Psoas muscle (tissue), 8 donors: ENCODE measurements at regions of chr2 and their contacts with region 1.

Region 1: DNA sequence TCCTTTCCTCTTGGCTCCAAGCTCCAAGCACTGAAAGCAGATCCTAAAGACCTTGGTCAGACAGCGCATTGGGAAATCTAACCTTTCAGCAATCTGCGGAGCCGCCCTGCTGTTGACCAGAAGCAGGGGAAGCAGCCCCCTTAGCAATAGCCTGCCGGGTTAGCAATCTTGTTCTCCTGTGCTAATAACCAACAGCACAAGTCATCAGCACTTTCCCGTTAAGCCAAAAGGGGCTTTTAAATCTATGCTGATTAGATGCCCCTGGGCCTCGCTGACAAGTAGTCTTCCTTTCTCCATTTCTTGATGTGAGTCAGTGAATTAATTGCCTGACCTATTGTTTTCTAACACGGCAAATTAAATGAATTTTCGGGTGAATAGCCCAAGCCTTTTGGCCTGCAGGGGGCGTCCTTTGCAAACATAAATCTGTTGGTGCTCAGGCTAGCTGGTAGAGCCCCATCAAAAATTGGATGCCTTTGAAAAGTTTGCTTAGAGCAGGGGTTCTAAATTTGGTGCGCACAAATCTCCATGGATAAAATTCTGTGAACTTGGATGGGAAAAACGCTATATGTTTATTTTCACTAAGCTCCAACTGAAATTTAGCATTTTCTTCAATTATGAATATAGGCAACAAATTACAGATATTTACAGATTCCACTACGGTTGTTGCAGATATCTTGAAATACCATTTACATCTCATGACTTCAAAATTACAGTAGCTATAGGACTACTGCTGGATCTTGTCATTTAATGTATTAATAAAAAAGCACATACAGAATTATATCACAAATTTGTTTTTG is 24.6 kb downstream of the MAIP1 start:
- DNase-seq: peak; percentile 80 to 89
- ATAC-seq: peak; percentile 63 to 91 (median 73)
- H3K4me3 ChIP-seq: peak overlapping the region; percentile 22
- H3K27ac ChIP-seq: no peak overlapping the region
- H3K4me1 ChIP-seq: no peaks in the 10 kb centered on the region
- H3K27me3 ChIP-seq: no peaks in the 10 kb centered on the region
- CTCF ChIP-seq: peak; percentile 89

Region 2: GRCh38 chr2:200471928-200472645 is 492.1 kb after region 1 on chr2:
- intact Hi-C with region 1: loop called in 1 of 2 experiments (anchors 2 kb)
- DNase-seq: no peak
- ATAC-seq: no peak
- H3K4me3 ChIP-seq: no peak overlapping the region
- H3K27ac ChIP-seq: no peak overlapping the region
- H3K4me1 ChIP-seq: no peaks in the 10 kb centered on the region
- H3K27me3 ChIP-seq: no peaks in the 10 kb centered on the region
- CTCF ChIP-seq: no peak

Region 3: GRCh38 chr2:200483729-200484198 is 503.7 kb after region 1 on chr2:
- intact Hi-C with region 1: loop called (anchors 2 kb)
- DNase-seq: no peak
- ATAC-seq: no peak
- H3K4me3 ChIP-seq: no peak overlapping the region
- H3K27ac ChIP-seq: no peak overlapping the region
- H3K4me1 ChIP-seq: peaks cover 3% of the 10 kb centered on the region
- H3K27me3 ChIP-seq: no peaks in the 10 kb centered on the region
- CTCF ChIP-seq: no peak

Region 4: DNA sequence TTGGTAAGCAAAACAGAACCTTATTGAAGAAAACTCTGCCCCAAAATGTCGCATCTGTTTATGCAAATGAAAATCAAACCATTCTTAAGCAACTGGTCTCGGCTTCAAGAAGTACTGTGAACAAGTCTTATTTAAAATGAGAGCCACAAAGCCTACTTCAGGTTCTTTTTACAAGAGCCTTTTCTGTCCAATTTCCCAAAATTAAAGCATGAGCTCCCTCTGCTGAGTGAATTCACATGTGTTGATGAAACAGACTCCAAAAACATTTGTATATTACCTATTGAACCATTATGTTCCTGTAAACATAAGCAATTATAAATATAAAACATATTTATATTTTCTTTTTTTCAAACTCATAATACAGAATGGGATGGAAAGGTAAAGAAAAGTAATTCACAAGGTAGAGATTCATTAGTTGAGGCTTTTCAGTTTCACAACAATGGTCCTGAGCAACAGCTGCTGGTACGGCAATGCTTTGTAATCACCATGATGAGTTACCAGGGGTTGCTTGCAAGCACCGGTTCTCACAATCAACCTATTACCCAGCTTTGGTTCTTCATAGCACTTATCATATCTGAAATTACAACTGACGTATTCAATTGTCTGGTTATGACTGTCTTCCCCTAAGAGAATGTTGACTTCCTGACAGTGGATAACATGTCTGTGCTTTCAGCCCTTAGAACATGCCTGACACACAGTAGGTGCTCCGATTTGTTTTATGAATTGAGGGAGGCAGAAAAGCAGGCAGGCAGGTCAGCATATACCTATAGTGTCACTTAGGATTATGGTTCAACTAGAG is 723.3 kb after region 1 on chr2:
- intact Hi-C with region 1: loop called in 1 of 2 experiments (anchors 10 kb)
- DNase-seq: no peak
- ATAC-seq: no peak
- H3K4me3 ChIP-seq: no peak overlapping the region
- H3K27ac ChIP-seq: no peak overlapping the region
- H3K4me1 ChIP-seq: no peaks in the 10 kb centered on the region
- H3K27me3 ChIP-seq: no peaks in the 10 kb centered on the region
- CTCF ChIP-seq: peak; percentile 37